MCF 10A (cell line): ENCODE measurements at regions of chrX and their contacts with region 1.

Region 1: DNA sequence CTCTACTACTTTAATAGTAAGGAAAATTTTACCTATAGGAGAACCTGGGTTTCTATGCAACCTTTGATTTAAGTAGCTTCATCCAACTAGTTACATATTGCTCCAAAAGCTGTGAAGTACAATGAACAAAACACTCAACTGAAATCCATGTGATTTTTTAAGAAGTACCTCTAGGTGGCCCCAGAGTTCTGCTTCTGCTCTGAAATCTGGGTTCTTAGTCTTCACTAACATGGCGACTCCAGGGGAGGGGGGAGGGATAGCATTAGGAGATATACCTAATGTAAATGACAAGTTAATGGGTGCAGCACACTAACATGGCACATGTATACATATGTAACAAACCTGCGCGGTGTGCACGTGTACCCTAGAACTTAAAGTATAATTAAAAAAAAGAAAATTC is 73.4 kb upstream of the MAGEB2 start:
- DNase-seq: peak; percentile 63
- H3K4me3 Mint-ChIP-seq: no peak overlapping the region
- H3K27ac Mint-ChIP-seq: no peak overlapping the region
- H3K4me1 Mint-ChIP-seq: no peaks in the 10 kb centered on the region
- H3K27me3 Mint-ChIP-seq: peaks cover 18% of the 10 kb centered on the region
- CTCF ChIP-seq: peak; percentile 34

Region 2: DNA sequence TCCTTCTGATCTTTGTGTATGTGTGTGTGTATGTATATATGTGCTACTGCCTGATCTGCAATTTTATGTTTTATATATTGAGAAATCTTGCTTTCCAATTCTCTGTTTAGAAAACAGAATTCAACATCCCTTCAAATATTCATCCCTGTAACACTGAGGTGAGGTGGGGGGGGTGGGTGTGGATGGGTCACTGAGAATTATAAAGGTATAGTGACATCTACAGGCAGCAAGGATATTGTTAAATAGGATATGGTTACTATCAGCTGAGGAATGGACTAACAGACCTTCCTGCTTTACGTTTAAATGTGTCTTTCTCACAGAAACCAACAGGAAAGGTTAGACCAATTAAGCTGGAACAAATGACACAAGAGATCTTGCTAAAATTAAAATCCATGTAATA is 54.4 kb after region 1 on chrX:
- CTCF ChIA-PET with region 1: interaction called, 5 read pairs
- POLR2A ChIA-PET with region 1: interaction called, 4 read pairs
- intact Hi-C with region 1: loop called (anchors 1 kb)
- DNase-seq: peak; percentile 26
- H3K4me3 Mint-ChIP-seq: no peak overlapping the region
- H3K27ac Mint-ChIP-seq: no peak overlapping the region
- H3K4me1 Mint-ChIP-seq: no peaks in the 10 kb centered on the region
- H3K27me3 Mint-ChIP-seq: peaks cover 35% of the 10 kb centered on the region
- CTCF ChIP-seq: peak; percentile 28

Region 3: GRCh38 chrX:30246769-30247489 is 105.0 kb after region 1 on chrX and contains the start of gene MAGEB1:
- CTCF ChIA-PET with region 1: no interaction called
- POLR2A ChIA-PET with region 1: no interaction called
- intact Hi-C with region 1: no loop called
- DNase-seq: no peak
- H3K4me3 Mint-ChIP-seq: no peak within 1 kb of the TSS
- H3K27ac Mint-ChIP-seq: no peak within 1 kb of the TSS
- H3K4me1 Mint-ChIP-seq: no peaks in the 10 kb centered on the region
- H3K27me3 Mint-ChIP-seq: peaks cover 24% of the 10 kb centered on the region
- CTCF ChIP-seq: no peak
- total RNA-seq, gene MAGEB1: not detected in 2 replicates

Region 4: DNA sequence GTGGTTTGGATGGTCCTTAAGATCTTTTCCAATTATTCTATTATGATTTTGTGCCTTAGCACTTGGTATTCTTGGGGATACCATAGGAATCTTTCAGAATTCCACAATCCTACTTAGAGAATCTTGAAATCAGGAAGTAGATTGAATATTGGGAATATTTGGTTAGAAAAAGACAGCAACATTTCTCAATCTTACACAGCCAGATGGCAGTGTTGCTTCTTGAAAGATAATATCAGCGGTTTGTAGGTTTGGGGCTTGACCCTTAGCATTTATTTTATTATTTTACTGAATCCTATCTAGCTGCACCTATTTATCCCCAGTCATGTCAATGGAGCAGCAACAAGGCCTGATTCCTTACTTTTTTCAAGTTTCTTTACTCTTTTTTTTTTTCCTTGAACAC is 133.5 kb after region 1 on chrX:
- CTCF ChIA-PET with region 1: no interaction called
- POLR2A ChIA-PET with region 1: no interaction called
- intact Hi-C with region 1: loop called (anchors 5 kb)
- DNase-seq: peak; percentile 49
- H3K4me3 Mint-ChIP-seq: no peak overlapping the region
- H3K27ac Mint-ChIP-seq: no peak overlapping the region
- H3K4me1 Mint-ChIP-seq: peaks cover 5% of the 10 kb centered on the region
- H3K27me3 Mint-ChIP-seq: no peaks in the 10 kb centered on the region
- CTCF ChIP-seq: peak; percentile 39

Region 5: GRCh38 chrX:30488092-30488491 is 346.1 kb after region 1 on chrX:
- CTCF ChIA-PET with region 1: interaction called, 4 read pairs
- POLR2A ChIA-PET with region 1: no interaction called
- intact Hi-C with region 1: loop called (anchors 5 kb)
- DNase-seq: peak; percentile 21
- H3K4me3 Mint-ChIP-seq: no peak overlapping the region
- H3K27ac Mint-ChIP-seq: no peak overlapping the region
- H3K4me1 Mint-ChIP-seq: no peaks in the 10 kb centered on the region
- H3K27me3 Mint-ChIP-seq: peaks cover 5% of the 10 kb centered on the region
- CTCF ChIP-seq: no peak

Region 6: GRCh38 chrX:30504309-30504708 is 362.3 kb after region 1 on chrX:
- CTCF ChIA-PET with region 1: no interaction called
- POLR2A ChIA-PET with region 1: no interaction called
- intact Hi-C with region 1: loop called (anchors 1 kb)
- DNase-seq: peak; percentile 52
- H3K4me3 Mint-ChIP-seq: no peak overlapping the region
- H3K27ac Mint-ChIP-seq: no peak overlapping the region
- H3K4me1 Mint-ChIP-seq: no peaks in the 10 kb centered on the region
- H3K27me3 Mint-ChIP-seq: peaks cover 47% of the 10 kb centered on the region
- CTCF ChIP-seq: peak; percentile 43